HCT116 (cell line): ENCODE measurements at regions of chr21 and their contacts with region 1.

Region 1: DNA sequence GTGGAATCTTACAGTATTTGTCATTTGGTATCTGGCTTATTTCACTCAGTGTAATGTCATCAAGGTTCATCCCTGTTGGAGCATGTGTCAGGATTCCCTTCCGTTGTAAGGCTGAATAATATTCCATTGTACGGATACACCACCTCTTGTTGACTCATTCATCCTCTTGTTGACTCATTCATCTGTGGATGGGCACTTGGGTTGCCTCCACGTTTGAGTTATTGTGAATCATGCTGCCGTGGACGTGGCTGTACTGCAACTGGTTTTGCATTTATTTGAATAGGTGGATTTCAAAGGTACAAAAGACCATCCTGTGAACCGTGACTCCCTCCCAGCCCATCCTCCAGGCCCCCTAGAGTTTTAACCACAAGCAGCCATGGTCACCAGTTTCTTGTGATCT is 11.9 kb upstream of the TCP10L start:
- DNase-seq: peak; percentile 77
- ATAC-seq: peak; percentile 80
- H3K4me3 ChIP-seq: no peak overlapping the region; a peak in 1 of 4 replicates
- H3K27ac ChIP-seq: no peak overlapping the region
- H3K4me1 ChIP-seq: peaks cover 3 to 14% of the 10 kb centered on the region in 2 experiments; a peak in 3 of 4 replicates
- H3K27me3 ChIP-seq: no peaks in the 10 kb centered on the region
- CTCF ChIP-seq: no peak
- POLR2A ChIP-seq: no peak
- RAD21 ChIP-seq: peak; percentile 12; the same call in 1 of the 2 replicates

Region 2: DNA sequence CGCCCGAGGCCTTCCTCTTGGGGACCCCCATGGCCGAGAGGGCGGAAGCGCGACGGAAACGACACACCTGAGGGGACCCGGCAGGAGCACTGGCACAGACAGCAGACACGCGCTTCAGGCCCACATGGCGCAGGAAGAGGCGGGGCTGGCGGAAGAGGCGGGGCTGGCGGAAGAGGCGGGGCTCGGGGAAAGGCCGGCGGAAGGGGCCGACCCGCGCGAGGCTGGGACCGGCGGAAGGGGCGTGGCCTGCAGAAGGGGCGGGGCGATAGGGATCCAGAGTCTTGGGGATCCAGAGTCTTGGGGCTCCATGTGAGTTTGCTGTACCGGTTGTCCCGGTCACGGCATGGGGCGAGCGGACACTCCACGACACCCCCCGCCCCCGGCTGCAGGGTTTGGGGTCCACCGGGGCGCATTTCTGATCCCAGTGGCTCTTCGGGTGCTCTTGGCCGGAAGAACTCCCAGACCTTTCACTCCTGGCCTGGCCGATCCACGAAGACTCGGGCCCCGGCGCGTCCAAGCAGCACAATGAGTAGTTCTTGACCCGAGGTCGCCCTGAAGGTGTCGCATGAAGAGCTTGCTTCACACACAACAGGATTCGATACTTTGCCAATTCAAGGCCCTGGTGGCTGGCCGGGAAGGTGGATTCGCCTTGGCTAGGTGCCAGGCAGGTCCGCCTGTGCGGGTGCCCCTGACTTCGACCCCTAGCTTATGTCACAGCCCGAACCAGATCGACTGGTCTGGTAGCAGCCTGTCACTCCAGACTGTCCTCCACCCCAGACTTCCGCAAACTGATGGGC is 204.1 kb before region 1 on chr21 and contains the start of gene URB1:
- CTCF ChIA-PET with region 1: interaction called, 10 read pairs
- POLR2A ChIA-PET with region 1: interaction called, 4 read pairs
- RAD21 ChIA-PET with region 1: interaction called, 5 to 6 read pairs
- intact Hi-C with region 1: no loop called
- DNase-seq: peak; percentile 49
- ATAC-seq: peak; percentile 90
- H3K4me3 ChIP-seq: peak within 1 kb of the TSS; percentile 97
- H3K27ac ChIP-seq: peak within 1 kb of the TSS; percentile 84
- H3K4me1 ChIP-seq: peaks cover 13 to 18% of the 10 kb centered on the region in 2 experiments; a peak in 3 of 4 replicates
- H3K27me3 ChIP-seq: no peaks in the 10 kb centered on the region
- CTCF ChIP-seq: no peak; a peak in 1 of 6 replicates
- POLR2A ChIP-seq: peak; percentile 72
- RAD21 ChIP-seq: no peak
- total RNA-seq, gene URB1: 28.3 TPM